Sciatic nerve (tissue), 2 donors: ENCODE measurements at regions of chrX and their contacts with region 1.

Region 1: GRCh38 chrX:45233531-45233930 is 32.9 kb upstream of the DIPK2B start:
- DNase-seq: no peak
- ATAC-seq: no peak

Region 2: GRCh38 chrX:45191383-45191782 is 42.1 kb before region 1 on chrX:
- intact Hi-C with region 1: no loop called
- DNase-seq: no peak
- ATAC-seq: no peak

Region 3: GRCh38 chrX:45274576-45274975 is 41.0 kb after region 1 on chrX:
- intact Hi-C with region 1: loop called (anchors 1 kb)
- DNase-seq: no peak
- ATAC-seq: no peak